GM10248 (cell line): ENCODE measurements at regions of chr11 and their contacts with region 1.

Region 1: DNA sequence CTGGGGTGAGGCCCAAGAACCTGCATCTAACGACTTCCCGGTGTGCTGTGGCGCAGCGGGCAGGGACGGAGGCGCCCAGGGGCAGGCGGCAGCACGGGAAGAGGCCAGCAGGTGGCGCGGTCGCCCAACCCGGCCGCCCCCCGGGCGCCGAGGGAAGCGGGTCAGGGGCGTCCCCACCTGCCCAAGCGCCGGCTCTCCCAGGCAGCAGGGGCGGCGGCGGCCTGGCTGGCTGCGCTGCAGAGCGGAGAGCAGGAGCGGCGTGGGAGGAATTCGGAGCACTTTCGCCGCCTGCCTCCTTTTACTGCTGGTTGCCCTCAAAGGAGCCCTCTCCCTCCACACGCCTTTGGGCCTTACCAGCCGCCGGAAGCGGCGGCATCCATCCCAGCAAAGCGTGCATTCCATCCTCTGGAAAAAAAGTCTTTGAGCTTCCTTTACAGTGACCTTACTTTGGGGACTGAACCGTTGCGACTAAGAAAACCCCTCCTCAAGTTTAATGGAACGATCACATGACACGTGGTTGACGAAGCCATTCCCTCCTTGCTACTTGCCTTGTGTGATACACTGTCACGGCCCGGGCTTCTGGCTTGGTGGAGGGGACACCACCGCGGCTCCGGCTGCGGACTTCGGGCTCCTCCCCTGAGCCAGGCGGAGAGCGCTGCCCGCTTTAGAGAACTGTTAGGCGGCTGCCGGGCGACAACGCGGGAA is 106.8 kb upstream of the CLMP start:
- DNase-seq: peak; percentile 89
- CTCF ChIP-seq: peak; percentile 90

Region 2: GRCh38 chr11:123122341-123122740 is 179.5 kb before region 1 on chr11:
- CTCF ChIA-PET with region 1: no interaction called
- POLR2A ChIA-PET with region 1: no interaction called
- DNase-seq: no peak
- CTCF ChIP-seq: no peak

Region 3: DNA sequence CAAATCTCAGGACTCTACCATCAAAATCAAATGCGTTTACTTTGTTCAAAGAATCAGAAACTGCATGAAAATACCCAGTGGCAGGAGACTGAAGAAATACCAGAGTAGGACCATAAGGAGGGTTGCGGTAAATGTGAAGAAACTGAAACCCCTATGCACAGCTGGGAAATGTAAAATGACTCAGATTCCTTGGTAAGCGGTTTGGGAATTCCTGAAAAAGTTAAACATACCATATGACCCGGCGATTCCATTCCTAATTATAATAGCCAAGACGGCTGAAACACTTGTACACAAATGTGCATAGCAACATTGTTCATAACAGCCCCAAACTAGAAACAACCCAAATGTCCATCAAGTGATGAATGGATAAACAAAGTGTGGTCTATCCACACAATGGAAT is 14.2 kb after region 1 on chr11:
- CTCF ChIA-PET with region 1: interaction called, 20 read pairs
- POLR2A ChIA-PET with region 1: no interaction called
- DNase-seq: no peak
- CTCF ChIP-seq: no peak